ENCODE measurements at regions of chr7 and their contacts with region 1.

Region 1: DNA sequence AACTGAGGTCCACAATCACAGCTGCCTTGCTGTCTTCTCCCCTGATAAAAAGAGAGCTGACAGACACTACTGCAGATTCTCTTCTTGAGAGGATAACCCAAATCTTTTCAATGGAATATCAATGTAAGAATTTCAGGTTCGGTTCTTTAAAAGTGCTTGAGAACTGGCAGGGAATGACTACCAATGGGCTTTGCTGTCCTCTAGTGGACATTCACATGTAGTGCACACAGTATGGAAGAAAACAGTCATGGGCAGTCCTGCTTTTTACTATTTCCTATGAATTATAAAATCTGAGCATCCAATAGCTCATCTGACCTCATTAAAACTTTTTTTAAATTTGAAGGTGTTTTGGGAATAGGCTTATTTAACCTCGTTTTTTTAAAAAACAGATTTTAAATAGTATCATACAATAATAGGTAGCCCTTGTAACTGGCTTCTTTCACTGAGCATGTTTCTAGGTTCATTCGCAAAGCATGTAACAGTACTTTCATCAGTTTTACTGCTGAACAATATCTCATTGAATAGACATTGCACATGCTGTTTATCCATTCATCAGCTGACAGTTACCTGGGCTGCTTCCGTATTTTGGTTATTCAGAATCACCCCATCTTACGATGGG is 18.3 kb downstream of the FZD9 start:
- DNase-seq: no peak

Region 2: DNA sequence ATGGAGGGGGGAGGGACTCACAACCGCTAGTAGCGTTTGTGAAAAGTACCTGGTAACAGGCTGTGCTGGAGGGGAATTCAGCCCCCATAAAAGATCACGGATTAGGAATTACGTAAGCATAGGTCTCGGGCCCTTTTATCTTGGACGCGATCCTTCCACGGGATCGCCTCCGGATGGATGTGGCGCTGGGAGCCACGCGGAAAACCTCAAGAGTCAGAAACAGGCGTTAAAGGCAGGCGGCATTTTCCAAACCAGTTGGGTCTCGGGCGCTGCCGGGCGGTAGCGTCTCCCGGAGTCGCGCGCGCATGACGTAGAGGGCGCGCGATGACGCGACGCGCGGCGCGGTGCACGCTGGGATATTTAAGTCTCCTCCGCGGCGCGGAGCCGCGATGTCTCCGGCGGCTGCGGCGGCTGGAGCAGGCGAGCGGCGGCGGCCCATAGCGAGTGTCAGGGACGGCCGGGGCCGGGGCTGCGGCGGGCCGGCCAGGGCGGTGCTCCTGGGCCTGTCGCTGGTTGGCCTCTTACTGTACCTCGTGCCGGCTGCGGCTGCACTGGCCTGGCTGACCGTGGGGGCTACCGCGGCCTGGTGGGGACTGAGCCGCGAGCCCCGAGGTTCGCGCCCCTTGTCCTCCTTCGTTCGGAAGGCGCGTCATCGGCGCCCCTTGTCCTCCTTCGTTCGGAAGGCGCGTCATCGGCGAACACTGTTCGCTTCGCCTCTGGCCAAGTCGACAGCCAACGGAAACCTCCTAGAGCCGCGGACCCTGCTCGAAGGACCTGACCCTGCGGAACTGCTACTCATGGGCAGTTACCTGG is 527.0 kb before region 1 on chr7 and contains the start of gene POM121:
- intact Hi-C with region 1: loop called (anchors 5 kb)
- DNase-seq: peak; percentile 91
- total RNA-seq, gene POM121: 21.1 TPM

Region 3: DNA sequence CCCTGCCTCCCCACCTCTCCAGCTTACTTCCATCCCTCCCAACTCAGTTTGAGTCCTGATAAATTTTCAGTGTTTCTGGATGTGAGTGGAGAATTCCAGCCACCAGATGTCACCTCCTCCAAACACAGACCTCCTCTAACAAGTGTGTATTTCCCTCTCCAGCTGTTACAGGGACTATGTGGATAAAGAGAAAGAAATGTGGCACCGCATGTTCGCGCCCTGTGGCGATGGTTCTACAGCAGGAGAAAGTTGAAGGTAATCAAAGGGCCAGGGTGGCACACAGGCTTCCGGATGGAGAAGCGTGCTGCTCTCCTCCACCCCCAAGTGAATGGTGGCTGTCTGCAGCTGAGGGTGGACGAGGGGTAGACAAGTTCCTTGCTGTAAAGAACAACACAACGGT is 109.2 kb before region 1 on chr7:
- intact Hi-C with region 1: loop called (anchors 5 kb)
- DNase-seq: no peak

Region 4: DNA sequence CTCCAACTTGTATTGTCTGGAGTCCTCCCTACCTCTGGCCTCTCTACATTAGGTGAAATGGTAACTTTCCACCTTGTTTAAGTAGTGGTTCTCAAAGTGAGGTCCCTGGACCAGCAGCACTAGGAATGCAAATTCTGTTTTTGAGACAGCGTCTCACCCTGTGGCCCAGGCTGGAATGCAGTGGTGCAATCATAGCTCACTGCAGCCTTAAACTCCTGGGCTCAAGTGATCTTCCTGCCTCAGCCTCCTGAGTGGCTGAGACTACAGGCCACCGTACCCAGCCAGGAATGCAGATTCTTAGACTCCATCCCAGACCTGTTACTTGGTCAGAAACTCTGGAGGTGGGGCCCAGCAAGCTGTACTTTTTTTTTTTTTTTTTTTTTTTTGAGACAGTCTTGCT is 133.3 kb after region 1 on chr7:
- intact Hi-C with region 1: no loop called
- DNase-seq: no peak